Panc1 (cell line): ENCODE measurements at regions of chr11 and their contacts with region 1.

Region 1: DNA sequence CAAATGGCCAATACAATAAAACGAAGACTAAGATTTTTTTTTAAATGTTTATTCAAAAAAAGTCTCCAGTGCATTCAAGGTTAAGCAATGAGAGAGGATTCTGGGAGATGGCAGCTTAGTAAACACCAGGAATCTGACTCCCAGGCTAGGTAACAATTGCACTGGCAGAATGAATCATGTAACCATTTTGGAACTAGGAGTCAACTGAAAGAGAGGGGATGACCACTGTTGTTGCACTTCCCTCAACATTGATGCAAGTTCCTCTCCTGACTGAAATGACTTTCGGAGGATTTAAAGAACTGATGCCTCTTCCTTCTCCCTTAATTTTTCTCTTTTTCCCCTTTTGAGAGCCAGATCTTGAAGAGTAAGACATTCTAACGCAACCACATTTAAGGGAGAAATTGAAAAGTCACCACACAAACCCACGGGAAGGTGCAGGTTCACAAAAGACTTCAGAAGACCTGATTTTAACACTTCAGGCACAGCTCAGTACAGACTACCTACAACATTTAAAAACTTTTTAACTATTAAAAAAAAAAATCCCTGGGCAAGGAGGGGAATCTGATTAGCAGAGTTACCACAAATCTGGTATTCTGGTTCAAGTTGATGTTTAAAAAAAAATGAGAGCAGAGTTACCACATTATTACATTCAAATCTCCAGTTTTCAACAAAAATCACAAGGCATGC is 56.8 kb downstream of the FCHSD2 start:
- DNase-seq: no peak
- ATAC-seq: no peak
- H3K4me3 ChIP-seq: no peak overlapping the region
- H3K27ac ChIP-seq: no peak overlapping the region
- H3K4me1 ChIP-seq: no peaks in the 10 kb centered on the region
- H3K27me3 ChIP-seq: no peaks in the 10 kb centered on the region
- CTCF ChIP-seq: no peak

Region 2: DNA sequence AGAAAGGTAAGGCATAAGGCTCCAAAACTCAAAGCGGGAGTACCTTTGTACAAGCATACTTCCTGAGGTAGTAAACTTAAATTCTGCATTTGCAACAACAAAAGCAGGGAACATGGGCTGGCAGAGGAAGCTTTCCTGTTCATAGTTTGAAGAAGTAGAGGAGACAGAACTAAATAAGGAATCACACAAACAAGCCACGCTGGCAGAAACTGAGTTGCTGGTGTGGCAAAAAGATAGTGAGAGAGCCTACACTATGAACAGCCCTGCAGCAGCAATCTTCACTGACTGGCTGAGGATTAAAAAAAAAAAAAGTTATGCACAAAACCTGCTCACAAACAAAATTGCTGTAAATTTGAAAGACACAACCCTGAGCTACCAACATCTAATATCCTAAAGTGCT is 10.3 kb after region 1 on chr11:
- CTCF ChIA-PET with region 1: no interaction called
- POLR2A ChIA-PET with region 1: no interaction called
- in situ Hi-C with region 1: no loop called
- intact Hi-C with region 1: loop called (anchors 1 kb)
- DNase-seq: no peak
- ATAC-seq: no peak
- H3K4me3 ChIP-seq: no peak overlapping the region
- H3K27ac ChIP-seq: no peak overlapping the region
- H3K4me1 ChIP-seq: no peaks in the 10 kb centered on the region
- H3K27me3 ChIP-seq: no peaks in the 10 kb centered on the region
- CTCF ChIP-seq: no peak

Region 3: GRCh38 chr11:73106347-73106746 is 21.0 kb after region 1 on chr11:
- CTCF ChIA-PET with region 1: no interaction called
- POLR2A ChIA-PET with region 1: no interaction called
- in situ Hi-C with region 1: no loop called
- intact Hi-C with region 1: no loop called
- DNase-seq: no peak
- ATAC-seq: no peak
- H3K4me3 ChIP-seq: no peak overlapping the region
- H3K27ac ChIP-seq: no peak overlapping the region
- H3K4me1 ChIP-seq: no peaks in the 10 kb centered on the region
- H3K27me3 ChIP-seq: no peaks in the 10 kb centered on the region
- CTCF ChIP-seq: no peak

Region 4: GRCh38 chr11:73795925-73796632 is 710.7 kb after region 1 on chr11:
- CTCF ChIA-PET with region 1: no interaction called
- POLR2A ChIA-PET with region 1: no interaction called
- in situ Hi-C with region 1: no loop called
- intact Hi-C with region 1: no loop called
- DNase-seq: no peak
- ATAC-seq: peak; percentile 76
- H3K4me3 ChIP-seq: no peak overlapping the region
- H3K27ac ChIP-seq: no peak overlapping the region
- H3K4me1 ChIP-seq: no peaks in the 10 kb centered on the region
- H3K27me3 ChIP-seq: no peaks in the 10 kb centered on the region
- CTCF ChIP-seq: no peak